ENCODE measurements at regions of chr1 and their contacts with region 1.

Region 1: GRCh38 chr1:29218223-29218622 is 12.5 kb downstream of the MECR start:
- DNase-seq: no peak
- H3K4me3 ChIP-seq: no peak overlapping the region
- H3K27ac ChIP-seq: no peak overlapping the region
- H3K4me1 ChIP-seq: peaks cover 0 to 4% (median 3%) of the 10 kb centered on the region in 4 experiments; a peak in 2 of 7 replicates
- H3K27me3 ChIP-seq: no peaks in the 10 kb centered on the region
- CTCF ChIP-seq: no peak
- EP300 ChIP-seq: no peak
- POLR2A ChIP-seq: no peak
- RAD21 ChIP-seq: no peak

Region 2: GRCh38 chr1:29192220-29192619 is 26.0 kb before region 1 on chr1:
- CTCF ChIA-PET with region 1: no interaction called
- POLR2A ChIA-PET with region 1: no interaction called
- DNase-seq: no peak
- H3K4me3 ChIP-seq: no peak overlapping the region
- H3K27ac ChIP-seq: no peak overlapping the region
- H3K4me1 ChIP-seq: no peaks in the 10 kb centered on the region
- H3K27me3 ChIP-seq: no peaks in the 10 kb centered on the region
- CTCF ChIP-seq: no peak
- EP300 ChIP-seq: no peak
- POLR2A ChIP-seq: no peak
- RAD21 ChIP-seq: no peak

Region 3: GRCh38 chr1:29230553-29231378 is 12.5 kb after region 1 on chr1 and contains the start of gene MECR:
- CTCF ChIA-PET with region 1: interaction called, 5 read pairs
- POLR2A ChIA-PET with region 1: interaction called, 11 read pairs
- DNase-seq: peak; percentile 89 to 100
- H3K4me3 ChIP-seq: peak within 1 kb of the TSS; percentile 78 to 90 (median 84)
- H3K27ac ChIP-seq: peak within 1 kb of the TSS; percentile 68; the same call in 1 of the 2 replicates
- H3K4me1 ChIP-seq: peaks cover 0 to 8% (median 3%) of the 10 kb centered on the region in 4 experiments; a peak in 3 of 7 replicates
- H3K27me3 ChIP-seq: peaks cover 0 to 1% (median 0%) of the 10 kb centered on the region in 4 experiments; a peak in 3 of 7 replicates
- CTCF ChIP-seq: peak in 2 of 3 experiments; percentile 5 to 23; a peak in 1 of 4 replicates
- EP300 ChIP-seq: peak in 1 of 2 experiments; percentile 73; a peak in 1 of 3 replicates
- POLR2A ChIP-seq: peak in 1 of 2 experiments; percentile 90; a peak in 2 of 3 replicates
- RAD21 ChIP-seq: no peak
- total RNA-seq, gene MECR: 24.4 and 26.5 TPM in 2 replicates

Region 4: DNA sequence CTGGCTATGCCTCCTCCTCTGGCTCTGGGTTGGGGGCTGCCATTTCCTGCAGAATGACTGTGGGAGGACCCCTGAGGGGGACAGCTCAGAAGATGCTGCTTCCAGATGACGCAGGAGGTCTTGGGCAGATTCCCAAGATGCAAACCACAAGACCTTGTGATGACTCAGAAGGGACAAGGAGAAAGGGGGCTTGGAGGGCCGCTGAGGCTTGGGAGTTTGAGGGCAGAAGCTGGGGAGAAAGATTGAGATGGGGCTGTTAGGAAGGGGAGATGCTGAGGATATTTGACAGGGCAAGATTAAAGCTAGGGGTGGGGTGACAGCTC is 25.6 kb after region 1 on chr1:
- CTCF ChIA-PET with region 1: no interaction called
- POLR2A ChIA-PET with region 1: no interaction called
- DNase-seq: no peak
- H3K4me3 ChIP-seq: no peak overlapping the region
- H3K27ac ChIP-seq: no peak overlapping the region
- H3K4me1 ChIP-seq: peaks cover 13 to 25% (median 20%) of the 10 kb centered on the region in 4 experiments
- H3K27me3 ChIP-seq: peaks cover 0 to 11% (median 8%) of the 10 kb centered on the region in 4 experiments; a peak in 6 of 7 replicates
- CTCF ChIP-seq: no peak
- EP300 ChIP-seq: no peak
- POLR2A ChIP-seq: no peak
- RAD21 ChIP-seq: no peak